Activated CD8-positive, alpha-beta memory T cell treated with anti-CD3 and anti-CD28 coated beads, Interleukin-2, amount 10 ng/mL, durations not matched to agents 7 days and 5 days (primary cell): ENCODE measurements at regions of chr17 and their contacts with region 1.

Region 1: GRCh38 chr17:7239091-7240027 is at the start of gene PHF23:
- DNase-seq: peak; percentile 99
- ATAC-seq: peak; percentile 71
- H3K4me3 Mint-ChIP-seq: peak within 1 kb of the TSS; percentile 86
- H3K27ac Mint-ChIP-seq: peak within 1 kb of the TSS; percentile 91
- H3K4me1 Mint-ChIP-seq: peaks cover 60% of the 10 kb centered on the region
- H3K27me3 Mint-ChIP-seq: no peaks in the 10 kb centered on the region
- total RNA-seq, gene PHF23: 42.1 to 53.2 TPM

Region 2: DNA sequence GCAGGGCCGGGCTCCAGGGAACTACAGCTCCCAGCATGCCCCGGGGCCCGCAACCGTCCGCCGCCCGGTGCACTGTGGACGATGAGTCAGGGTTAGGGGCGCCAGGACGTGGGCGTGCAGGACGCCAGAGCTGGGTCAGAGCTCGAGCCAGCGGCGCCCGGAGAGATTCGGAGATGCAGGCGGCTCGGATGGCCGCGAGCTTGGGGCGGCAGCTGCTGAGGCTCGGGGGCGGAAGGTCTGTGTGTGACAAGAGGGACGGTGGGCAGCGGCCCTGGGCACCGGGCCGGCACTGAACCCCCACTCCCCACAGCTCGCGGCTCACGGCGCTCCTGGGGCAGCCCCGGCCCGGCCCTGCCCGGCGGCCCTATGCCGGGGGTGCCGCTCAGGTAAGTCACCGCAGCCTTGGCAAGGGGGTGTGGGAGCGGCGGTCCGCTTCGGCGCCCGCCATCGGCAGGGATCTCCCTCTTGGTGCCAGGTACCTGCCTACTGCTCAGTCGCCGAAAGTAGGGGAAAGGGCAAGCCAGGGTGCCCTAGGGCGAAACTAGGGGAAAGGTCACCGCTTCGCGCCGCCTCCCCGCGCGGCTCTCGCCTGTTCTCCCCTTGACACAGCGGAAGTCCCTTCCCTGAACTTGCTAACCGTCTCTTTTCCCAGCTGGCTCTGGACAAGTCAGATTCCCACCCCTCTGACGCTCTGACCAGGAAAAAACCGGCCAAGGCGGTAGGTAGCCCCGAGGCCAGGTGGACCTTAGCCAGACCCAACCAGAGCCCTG is 19.4 kb before region 1 on chr17 and contains the starts of genes ACADVL and DLG4:
- CTCF ChIA-PET with region 1: interaction called, 18 read pairs
- DNase-seq: peak; percentile 89
- ATAC-seq: peak; percentile 87
- H3K4me3 Mint-ChIP-seq: peak within 1 kb of the TSS; percentile 91
- H3K27ac Mint-ChIP-seq: peak within 1 kb of the TSS; percentile 91
- H3K4me1 Mint-ChIP-seq: peaks cover 44% of the 10 kb centered on the region
- H3K27me3 Mint-ChIP-seq: no peaks in the 10 kb centered on the region
- total RNA-seq, gene ACADVL: 411 to 423 TPM
- total RNA-seq, gene DLG4: 4.9 to 5.3 TPM

Region 3: DNA sequence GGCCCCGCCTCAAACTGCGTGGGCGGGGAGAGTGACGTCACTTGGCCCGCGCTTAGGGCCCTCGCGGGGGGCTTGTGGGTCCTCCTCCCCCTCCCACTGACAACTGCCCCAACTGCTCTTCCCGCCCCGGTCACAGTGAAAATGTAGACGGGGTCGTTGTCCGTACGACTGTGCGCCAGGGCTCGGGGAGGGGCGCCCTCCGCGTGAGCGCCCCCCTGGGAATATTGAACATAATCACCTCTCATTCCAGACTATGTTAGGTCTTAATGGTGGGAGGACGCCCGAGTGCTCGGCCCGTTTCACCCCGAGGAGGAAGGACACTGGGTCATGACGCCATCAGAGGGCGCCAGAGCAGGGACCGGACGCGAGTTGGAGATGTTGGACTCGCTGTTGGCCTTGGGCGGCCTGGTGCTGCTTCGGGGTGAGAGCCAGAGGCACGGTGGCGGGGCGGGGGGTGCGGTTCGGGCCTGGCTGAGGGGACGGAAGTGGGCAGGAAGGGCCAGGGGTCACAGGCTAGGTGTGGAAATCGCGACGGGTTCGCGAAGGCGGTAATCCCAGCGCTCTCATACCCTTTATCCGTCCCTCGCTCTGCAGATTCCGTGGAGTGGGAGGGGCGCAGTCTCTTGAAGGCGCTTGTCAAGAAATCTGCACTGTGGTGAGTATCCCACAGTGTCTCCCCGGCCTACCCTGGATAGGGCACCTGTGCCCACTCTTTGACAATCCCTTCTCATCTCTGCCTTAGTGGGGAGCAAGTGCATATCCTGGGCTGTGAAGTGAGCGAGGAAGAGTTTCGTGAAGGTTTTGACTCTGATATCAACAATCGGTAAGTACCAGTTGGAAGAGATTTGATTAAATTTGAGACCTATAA is 13.1 kb after region 1 on chr17 and contains the start of gene ELP5:
- CTCF ChIA-PET with region 1: interaction called, 18 read pairs
- DNase-seq: peak; percentile 96
- ATAC-seq: peak; percentile 73
- H3K4me3 Mint-ChIP-seq: peak within 1 kb of the TSS; percentile 91
- H3K27ac Mint-ChIP-seq: peak within 1 kb of the TSS; percentile 99
- H3K4me1 Mint-ChIP-seq: peaks cover 41% of the 10 kb centered on the region
- H3K27me3 Mint-ChIP-seq: no peaks in the 10 kb centered on the region
- total RNA-seq, gene ELP5: 56.5 to 70.4 TPM